Activated B cell treated with CpG ODN at 0.5 μM for 24 hours (primary cell): ENCODE measurements at regions of chr15 and their contacts with region 1.

Region 1: DNA sequence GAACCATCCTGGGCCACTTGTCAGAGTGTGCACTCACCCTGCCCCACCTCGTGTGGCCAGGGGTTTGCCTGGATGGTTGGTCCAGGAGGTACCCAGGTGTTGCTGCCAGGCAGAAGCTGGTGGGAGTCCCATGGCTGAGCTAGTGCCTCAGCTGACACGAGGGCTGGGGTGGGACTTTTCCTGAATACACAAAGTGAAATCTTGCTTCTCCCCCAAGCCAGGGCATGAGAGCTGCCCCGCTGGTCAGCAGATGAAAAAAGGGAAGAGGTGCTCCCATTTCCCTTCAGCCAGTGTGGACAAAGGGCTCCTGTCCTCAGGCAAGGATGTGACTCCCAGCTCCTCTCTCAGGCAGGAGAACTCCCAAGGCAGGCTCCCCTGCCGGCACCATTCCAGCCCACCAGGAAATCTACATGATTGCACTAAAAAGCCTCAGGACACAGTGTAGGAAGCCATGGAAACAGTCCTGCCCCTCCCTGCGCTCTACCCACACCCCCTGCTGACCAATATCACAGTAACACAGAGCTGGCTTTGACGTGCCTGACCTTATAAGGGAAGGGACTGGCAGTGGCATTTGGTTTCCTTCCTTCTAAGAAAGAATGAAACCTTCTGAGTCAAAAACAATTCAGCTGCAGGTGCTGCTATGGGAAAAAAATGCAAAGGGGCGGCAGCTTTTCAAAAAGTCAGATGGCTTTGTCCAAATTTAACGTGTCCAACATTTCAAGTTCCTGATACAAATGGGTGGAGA is 33.9 kb downstream of the MYO5C start:
- DNase-seq: peak; percentile 36
- ATAC-seq: peak; percentile 100
- H3K4me3 Mint-ChIP-seq: peak overlapping the region; percentile 71
- H3K27ac Mint-ChIP-seq: peak overlapping the region; percentile 94
- H3K4me1 Mint-ChIP-seq: peaks cover 39% of the 10 kb centered on the region
- H3K27me3 Mint-ChIP-seq: no peaks in the 10 kb centered on the region
- CTCF ChIP-seq: no peak

Region 2: DNA sequence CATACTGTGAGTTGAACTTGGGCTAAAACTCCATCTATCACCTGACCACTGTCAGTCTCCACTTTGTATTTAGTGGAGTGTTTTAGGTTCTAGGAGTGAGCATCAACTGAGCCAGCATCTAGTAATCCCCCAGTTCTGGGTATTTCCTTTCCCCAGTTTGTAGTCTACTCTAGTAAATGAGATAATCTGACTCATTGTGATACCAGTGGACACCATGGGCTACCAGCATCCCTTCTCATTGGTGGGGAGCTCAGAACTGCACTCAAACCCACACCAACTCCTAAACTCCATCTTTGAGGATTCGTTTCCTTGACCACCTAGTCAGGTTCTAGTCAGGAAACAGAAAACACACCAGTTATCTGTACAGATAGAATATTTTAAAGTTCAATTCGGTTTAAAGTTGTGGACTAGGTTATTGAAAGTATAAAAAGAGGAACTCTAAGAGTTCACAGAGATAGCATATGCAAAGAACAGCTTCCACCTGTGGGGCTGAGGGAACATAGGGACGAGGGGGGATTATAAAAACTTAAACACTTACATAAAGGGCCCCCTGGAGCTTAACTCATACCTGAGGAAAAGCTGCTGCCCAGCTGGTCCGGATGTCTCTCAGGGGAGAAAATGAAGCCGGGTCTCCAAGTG is 326.1 kb before region 1 on chr15:
- CTCF ChIA-PET with region 1: no interaction called
- POLR2A ChIA-PET with region 1: no interaction called
- intact Hi-C with region 1: no loop called
- DNase-seq: no peak
- ATAC-seq: peak; percentile 89
- H3K4me3 Mint-ChIP-seq: peak overlapping the region; percentile 33
- H3K27ac Mint-ChIP-seq: peak overlapping the region; percentile 87
- H3K4me1 Mint-ChIP-seq: peaks cover 31% of the 10 kb centered on the region
- H3K27me3 Mint-ChIP-seq: no peaks in the 10 kb centered on the region
- CTCF ChIP-seq: no peak

Region 3: GRCh38 chr15:52163321-52164190 is 98.1 kb before region 1 on chr15:
- CTCF ChIA-PET with region 1: no interaction called
- POLR2A ChIA-PET with region 1: no interaction called
- intact Hi-C with region 1: no loop called
- DNase-seq: no peak
- ATAC-seq: peak; percentile 37
- H3K4me3 Mint-ChIP-seq: no peak overlapping the region
- H3K27ac Mint-ChIP-seq: no peak overlapping the region
- H3K4me1 Mint-ChIP-seq: peaks cover 37% of the 10 kb centered on the region
- H3K27me3 Mint-ChIP-seq: no peaks in the 10 kb centered on the region
- CTCF ChIP-seq: no peak

Region 4: GRCh38 chr15:52217186-52217585 is 44.5 kb before region 1 on chr15:
- CTCF ChIA-PET with region 1: interaction called, 8 read pairs
- POLR2A ChIA-PET with region 1: interaction called, 10 read pairs
- intact Hi-C with region 1: no loop called
- DNase-seq: no peak
- ATAC-seq: peak; percentile 33
- H3K4me3 Mint-ChIP-seq: no peak overlapping the region
- H3K27ac Mint-ChIP-seq: no peak overlapping the region
- H3K4me1 Mint-ChIP-seq: peaks cover 35% of the 10 kb centered on the region
- H3K27me3 Mint-ChIP-seq: no peaks in the 10 kb centered on the region
- CTCF ChIP-seq: no peak

Region 5: GRCh38 chr15:52289629-52290081 is 28.0 kb after region 1 on chr15:
- CTCF ChIA-PET with region 1: interaction called, 4 read pairs
- POLR2A ChIA-PET with region 1: interaction called, 7 read pairs
- intact Hi-C with region 1: loop called (anchors 2 kb)
- DNase-seq: no peak
- ATAC-seq: no peak
- H3K4me3 Mint-ChIP-seq: no peak overlapping the region
- H3K27ac Mint-ChIP-seq: no peak overlapping the region
- H3K4me1 Mint-ChIP-seq: peaks cover 25% of the 10 kb centered on the region
- H3K27me3 Mint-ChIP-seq: peaks cover 9% of the 10 kb centered on the region
- CTCF ChIP-seq: no peak

Region 6: DNA sequence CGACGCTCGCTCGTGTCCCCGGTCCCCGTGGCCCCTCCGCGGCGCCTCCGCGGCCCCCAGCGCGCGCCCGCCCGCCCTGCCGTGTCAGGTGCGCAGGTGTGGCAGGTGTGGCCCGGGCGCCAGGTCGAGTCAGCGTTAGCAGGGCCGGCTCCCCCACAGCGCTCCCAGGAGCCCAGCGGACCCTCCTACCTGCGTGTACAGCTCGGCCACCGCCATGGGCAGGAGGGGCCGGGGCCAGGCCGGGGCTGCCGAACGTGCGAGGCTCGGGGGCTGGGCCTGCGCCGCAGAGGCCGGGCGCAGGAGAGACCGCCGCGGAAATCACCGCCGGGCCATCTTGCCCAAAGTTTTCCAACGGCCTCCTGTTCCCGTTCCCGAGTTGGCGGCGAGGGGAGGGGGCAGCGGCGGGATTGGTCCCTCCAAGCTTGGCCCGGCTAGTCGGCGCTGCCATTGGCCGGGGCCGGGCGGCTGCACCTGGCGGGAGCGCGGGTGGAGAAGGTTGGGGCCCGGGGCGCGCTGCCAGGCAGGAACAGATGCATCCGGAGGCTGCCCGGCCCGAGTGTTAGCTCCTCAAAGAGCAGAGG is 33.8 kb after region 1 on chr15 and contains the start of gene MYO5C:
- CTCF ChIA-PET with region 1: interaction called, 4 read pairs
- POLR2A ChIA-PET with region 1: interaction called, 12 read pairs
- intact Hi-C with region 1: loop called (anchors 2 kb)
- DNase-seq: no peak
- ATAC-seq: peak; percentile 41
- H3K4me3 Mint-ChIP-seq: peak within 1 kb of the TSS; percentile 55
- H3K27ac Mint-ChIP-seq: no peak within 1 kb of the TSS
- H3K4me1 Mint-ChIP-seq: peaks cover 25% of the 10 kb centered on the region
- H3K27me3 Mint-ChIP-seq: peaks cover 10% of the 10 kb centered on the region
- CTCF ChIP-seq: no peak
- total RNA-seq, gene MYO5C: 2.4 and 3.3 TPM in 2 replicates

Region 7: DNA sequence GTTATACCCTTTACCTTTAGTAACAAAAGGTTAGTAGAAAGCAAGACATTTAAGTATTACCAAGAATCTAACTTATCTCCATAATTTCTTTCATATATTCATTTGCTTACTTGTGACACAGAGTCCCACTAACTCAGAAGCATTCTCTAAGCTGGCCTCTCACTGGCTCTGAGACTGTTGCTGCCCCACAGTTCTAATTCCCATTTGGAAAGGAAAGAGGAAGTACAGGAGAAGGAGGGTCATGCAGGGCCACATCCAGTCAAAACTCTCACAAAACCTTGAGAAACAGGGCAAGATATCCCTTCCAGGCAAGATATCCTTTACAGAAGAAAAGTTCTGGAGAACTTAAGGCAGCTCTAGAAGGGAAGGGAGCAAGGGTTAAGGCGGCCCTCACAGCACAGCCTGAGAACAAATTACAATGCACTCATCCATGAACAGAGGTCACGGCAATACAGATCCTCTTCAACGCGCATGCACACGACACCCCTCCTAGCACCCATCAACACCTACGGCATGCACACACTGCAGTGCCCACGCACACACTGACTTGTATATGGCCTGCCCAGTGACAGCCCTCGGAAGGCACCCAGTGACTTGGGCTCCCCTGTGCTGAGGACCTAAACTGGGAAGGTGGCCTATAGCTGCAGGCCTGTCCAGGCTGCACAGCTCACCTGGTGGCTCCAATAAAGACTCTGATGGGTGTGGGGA is 46.9 kb after region 1 on chr15:
- CTCF ChIA-PET with region 1: interaction called, 9 read pairs
- POLR2A ChIA-PET with region 1: interaction called, 12 read pairs
- intact Hi-C with region 1: loop called (anchors 1 kb)
- DNase-seq: no peak
- ATAC-seq: peak; percentile 80
- H3K4me3 Mint-ChIP-seq: peak overlapping the region; percentile 7
- H3K27ac Mint-ChIP-seq: peak overlapping the region; percentile 80
- H3K4me1 Mint-ChIP-seq: peaks cover 23% of the 10 kb centered on the region
- H3K27me3 Mint-ChIP-seq: no peaks in the 10 kb centered on the region
- CTCF ChIP-seq: no peak

Region 8: DNA sequence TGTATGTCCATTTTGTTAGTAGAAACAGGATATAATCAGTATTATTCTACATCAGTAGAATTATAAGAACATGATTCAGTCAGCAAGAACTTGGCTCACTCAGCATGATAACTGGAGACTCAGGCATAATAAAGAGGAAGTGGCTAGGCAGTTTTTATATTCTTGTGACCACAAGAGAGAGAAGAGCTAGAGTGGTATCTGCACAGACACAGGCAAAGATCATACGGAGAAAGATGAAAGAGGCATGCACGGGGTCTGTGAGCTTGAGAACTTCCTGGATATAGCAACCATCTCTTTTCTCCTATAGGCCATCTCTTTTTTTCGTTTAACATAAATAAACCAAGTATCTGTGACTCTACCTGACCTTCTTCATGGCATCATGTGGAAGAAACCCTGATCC is 220.2 kb after region 1 on chr15:
- CTCF ChIA-PET with region 1: no interaction called
- POLR2A ChIA-PET with region 1: no interaction called
- intact Hi-C with region 1: no loop called
- DNase-seq: no peak
- ATAC-seq: peak; percentile 99
- H3K4me3 Mint-ChIP-seq: peak overlapping the region; percentile 7
- H3K27ac Mint-ChIP-seq: peak overlapping the region; percentile 85
- H3K4me1 Mint-ChIP-seq: peaks cover 57% of the 10 kb centered on the region
- H3K27me3 Mint-ChIP-seq: no peaks in the 10 kb centered on the region
- CTCF ChIP-seq: no peak